HEK293T (cell line): ENCODE measurements at regions of chr7 and their contacts with region 1.

Region 1: DNA sequence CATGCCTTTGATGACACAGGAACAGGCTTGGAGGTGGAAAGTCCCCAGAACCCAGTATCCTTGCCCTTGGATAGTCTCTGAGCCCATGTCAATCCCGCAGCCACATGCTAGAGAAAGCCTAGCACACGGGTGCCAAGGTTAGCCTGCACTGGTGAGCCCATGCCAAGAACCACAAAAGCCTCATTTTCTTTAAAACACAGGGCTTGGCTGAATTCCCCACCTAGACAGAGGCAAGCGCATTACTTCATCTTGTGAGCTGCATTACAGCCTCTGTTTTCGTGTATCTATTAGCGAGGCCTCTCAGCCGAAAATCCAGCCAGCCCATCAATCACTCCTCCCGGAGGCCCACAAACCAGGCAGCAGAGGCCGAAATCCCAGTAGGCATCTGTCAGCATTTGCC is 314.9 kb upstream of the AUTS2 start:
- DNase-seq: no peak

Region 2: DNA sequence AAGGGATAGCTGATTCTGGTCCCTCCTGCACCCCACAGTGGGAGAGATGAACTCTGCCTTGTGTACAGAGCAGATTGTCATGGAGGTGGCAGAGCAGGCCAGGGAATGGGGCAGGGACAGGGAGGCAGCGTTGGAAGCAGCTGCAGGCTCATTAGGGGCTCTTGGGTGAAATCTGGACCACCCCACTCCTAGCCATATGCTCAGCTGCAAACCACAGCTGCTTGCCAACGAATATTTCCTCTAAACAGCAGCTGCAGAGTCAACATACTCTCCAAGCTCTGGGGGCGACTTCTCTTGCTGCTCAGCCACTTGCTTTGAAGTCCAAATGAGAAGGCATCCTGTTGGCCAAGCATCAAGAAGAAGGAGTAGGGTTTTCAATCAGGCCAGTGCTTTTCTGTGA is 12.6 kb after region 1 on chr7:
- CTCF ChIA-PET with region 1: no interaction called
- POLR2A ChIA-PET with region 1: no interaction called
- DNase-seq: no peak

Region 3: DNA sequence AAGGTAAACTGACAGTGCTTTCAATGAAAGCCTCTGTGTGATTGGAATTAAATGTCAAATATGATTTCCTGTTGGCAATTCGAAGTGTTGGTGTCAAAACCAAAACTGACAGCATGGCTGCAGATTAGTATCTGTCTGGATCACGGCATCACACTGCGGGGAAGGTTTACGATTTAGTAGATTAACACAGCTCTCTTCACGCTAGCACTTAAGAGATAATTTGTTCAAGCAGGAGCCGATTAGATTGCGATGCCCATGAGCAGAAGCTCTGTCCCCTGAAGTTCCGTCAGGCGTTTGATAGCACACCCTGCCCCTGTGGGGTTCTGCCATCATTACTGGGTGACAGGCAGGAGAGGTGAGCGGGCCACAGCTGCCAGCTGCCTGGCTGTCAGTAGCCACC is 35.4 kb after region 1 on chr7:
- CTCF ChIA-PET with region 1: interaction called, 10 read pairs
- POLR2A ChIA-PET with region 1: no interaction called
- DNase-seq: no peak

Region 4: GRCh38 chr7:69373171-69374043 is 90.0 kb after region 1 on chr7:
- CTCF ChIA-PET with region 1: no interaction called
- POLR2A ChIA-PET with region 1: no interaction called
- DNase-seq: no peak